CD8-positive, alpha-beta T cell (primary cell): ENCODE measurements at regions of chr1 and their contacts with region 1.

Region 1: DNA sequence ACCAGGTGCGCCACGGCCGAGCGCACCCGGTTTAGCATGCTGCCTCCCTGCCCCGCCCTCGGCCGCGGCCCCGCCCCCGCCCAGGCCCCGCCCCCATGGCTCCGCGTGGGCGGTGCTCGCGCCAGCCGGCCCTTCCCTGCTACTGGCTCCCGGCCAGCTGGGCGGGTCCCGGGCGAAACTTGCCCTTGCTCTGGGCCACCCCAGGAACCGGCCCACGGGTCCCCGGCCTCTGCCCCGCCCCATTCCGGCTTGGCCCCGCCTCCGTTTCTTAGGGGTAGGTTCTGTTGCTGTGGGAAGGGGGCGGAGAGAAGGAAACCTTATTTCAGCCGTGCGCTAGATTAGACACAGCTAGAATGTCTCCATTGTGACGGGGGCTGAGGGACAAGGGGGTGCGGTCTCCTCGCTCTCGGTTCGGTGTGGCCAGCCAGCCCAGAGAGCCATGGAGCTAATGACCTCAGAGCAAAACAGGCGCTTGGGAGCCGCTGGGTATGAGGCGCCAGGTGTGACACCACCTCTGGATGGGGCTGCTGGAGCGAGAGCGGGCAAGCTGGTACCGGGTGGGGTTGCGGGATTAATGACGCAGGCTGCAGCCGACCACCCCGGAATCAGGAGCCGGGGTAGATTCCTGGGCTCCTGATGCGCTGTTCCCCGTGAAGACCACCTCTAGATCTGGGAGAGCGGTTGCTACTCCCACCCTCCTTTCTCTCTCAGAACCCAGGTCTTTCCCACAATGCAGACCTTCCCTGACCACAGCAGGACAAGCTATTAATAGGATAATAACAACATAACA is at the start of gene PPM1J:
- DNase-seq: peak; percentile 90 to 97 (median 95)
- ATAC-seq: peak; percentile 82
- H3K4me3 ChIP-seq: peak within 1 kb of the TSS; percentile 52 to 67
- H3K4me3 Mint-ChIP-seq: peak within 1 kb of the TSS; percentile 90
- H3K27ac ChIP-seq: peak within 1 kb of the TSS; percentile 10 to 42
- H3K27ac Mint-ChIP-seq: peak within 1 kb of the TSS; percentile 88
- H3K4me1 ChIP-seq: peaks cover 25% of the 10 kb centered on the region
- H3K4me1 Mint-ChIP-seq: peaks cover 21% of the 10 kb centered on the region
- H3K27me3 ChIP-seq: peaks cover 0 to 10% of the 10 kb centered on the region in 2 experiments
- H3K27me3 Mint-ChIP-seq: peaks cover 12% of the 10 kb centered on the region
- CTCF ChIP-seq: no peak
- total RNA-seq, gene PPM1J: 0.57 to 0.69 TPM

Region 2: DNA sequence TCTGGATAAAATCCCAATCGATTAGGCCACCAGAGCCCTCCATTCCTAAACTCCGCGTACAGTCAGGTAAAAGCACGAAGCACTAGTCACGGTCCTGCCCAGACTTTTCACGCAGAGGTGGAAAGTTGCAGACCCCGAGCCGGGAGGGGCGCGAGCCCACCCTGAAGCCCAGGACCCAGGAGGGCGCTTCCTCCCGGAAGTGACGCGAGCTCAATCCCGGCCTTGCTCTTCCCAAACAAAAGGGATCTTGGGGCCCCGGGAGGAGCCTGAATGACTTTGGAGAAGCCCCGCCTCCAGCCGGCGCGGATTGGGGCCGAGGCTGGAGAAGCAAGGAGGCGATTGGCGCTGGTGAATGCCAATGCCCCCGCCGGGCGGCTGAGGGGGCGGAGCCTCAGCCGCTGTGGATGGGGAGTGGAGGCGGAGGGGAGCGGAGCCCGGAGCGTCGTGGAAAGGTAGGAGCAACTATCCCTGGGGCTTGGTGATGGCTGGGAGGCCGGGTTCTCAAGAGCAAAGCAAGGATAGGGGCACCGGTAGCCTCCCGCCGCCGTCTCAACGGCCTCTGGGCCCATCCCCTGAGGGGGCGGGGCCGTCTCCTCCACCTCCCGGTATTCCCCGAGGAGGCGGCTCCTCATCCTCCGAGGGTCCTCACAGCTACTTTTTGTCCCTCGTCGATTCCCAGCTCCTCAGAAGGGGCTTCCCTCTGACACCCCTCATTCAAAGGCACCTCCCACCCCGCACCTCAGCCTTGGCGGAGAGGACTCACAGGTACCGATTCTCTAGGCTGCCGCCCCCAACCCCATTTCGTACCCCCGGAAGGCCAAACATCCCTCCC is 319.4 kb before region 1 on chr1 and contains the start of gene CTTNBP2NL:
- CTCF ChIA-PET with region 1: interaction called, 32 read pairs
- POLR2A ChIA-PET with region 1: interaction called, 3 read pairs
- intact Hi-C with region 1: loop called in 1 of 2 experiments (anchors 1 kb)
- DNase-seq: peak; percentile 51 to 87 (median 78)
- ATAC-seq: peak; percentile 98
- H3K4me3 ChIP-seq: peak within 1 kb of the TSS; percentile 86 to 89
- H3K4me3 Mint-ChIP-seq: peak within 1 kb of the TSS; percentile 83
- H3K27ac ChIP-seq: no peak within 1 kb of the TSS
- H3K27ac Mint-ChIP-seq: peak within 1 kb of the TSS; percentile 37
- H3K4me1 ChIP-seq: peaks cover 15% of the 10 kb centered on the region
- H3K4me1 Mint-ChIP-seq: peaks cover 15% of the 10 kb centered on the region
- H3K27me3 ChIP-seq: peaks cover 3% of the 10 kb centered on the region in 2 experiments
- H3K27me3 Mint-ChIP-seq: peaks cover 21% of the 10 kb centered on the region
- CTCF ChIP-seq: no peak
- total RNA-seq, gene CTTNBP2NL: not detected

Region 3: GRCh38 chr1:112674439-112674985 is 40.9 kb before region 1 on chr1 and contains the start of gene MOV10:
- CTCF ChIA-PET with region 1: interaction called, 12 read pairs
- POLR2A ChIA-PET with region 1: interaction called, 15 read pairs
- intact Hi-C with region 1: no loop called
- DNase-seq: peak in 8 of 9 experiments; percentile 34 to 85 (median 62)
- ATAC-seq: peak; percentile 67
- H3K4me3 ChIP-seq: peak within 1 kb of the TSS; percentile 65 to 85
- H3K4me3 Mint-ChIP-seq: peak within 1 kb of the TSS; percentile 93
- H3K27ac ChIP-seq: peak within 1 kb of the TSS; percentile 63 to 75
- H3K27ac Mint-ChIP-seq: peak within 1 kb of the TSS; percentile 94
- H3K4me1 ChIP-seq: peaks cover 24% of the 10 kb centered on the region
- H3K4me1 Mint-ChIP-seq: peaks cover 46% of the 10 kb centered on the region
- H3K27me3 ChIP-seq: no peaks in the 10 kb centered on the region
- H3K27me3 Mint-ChIP-seq: no peaks in the 10 kb centered on the region
- CTCF ChIP-seq: no peak
- total RNA-seq, gene MOV10: 92.4 to 94.7 TPM

Region 4: DNA sequence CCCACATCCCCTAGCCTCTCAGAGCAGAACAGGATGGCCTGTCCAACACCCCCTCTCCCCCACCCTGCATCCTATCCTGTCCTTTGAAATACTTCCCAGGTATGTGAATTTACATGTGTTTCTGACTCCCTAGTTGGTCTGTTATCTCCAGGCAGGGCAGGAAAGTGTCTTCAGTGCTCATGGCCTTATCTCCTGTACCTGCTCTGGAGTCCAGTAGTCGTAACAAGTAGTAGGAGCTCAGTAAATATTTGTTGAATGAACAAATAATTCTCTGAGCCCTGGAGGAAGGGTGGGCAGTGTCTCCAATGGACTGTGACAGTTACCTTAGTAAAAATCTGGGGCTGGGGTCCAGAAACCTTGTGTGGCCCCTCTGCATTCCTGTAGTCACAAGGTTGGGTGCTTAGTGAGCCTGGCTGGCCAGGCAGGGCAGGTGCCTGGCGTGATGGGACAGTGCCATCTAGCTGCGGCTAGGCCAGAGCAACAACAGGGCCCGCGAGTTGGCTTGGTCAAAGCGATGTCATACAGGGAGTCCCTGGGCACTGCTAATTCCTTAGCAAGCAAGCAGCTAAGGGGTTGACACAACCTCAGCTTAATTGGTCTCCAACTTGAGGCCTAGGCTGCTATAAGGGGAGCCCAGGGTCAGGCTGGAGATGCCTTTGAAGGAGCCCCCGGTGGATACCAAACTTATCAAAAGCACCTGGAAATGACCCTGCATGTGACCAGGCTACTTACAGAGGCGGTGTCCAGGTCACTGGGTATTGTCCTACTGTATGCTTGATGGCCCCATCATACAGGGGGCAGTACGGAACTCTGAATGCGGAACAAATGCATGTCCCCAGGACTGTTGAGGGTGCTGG is 88.7 kb after region 1 on chr1:
- CTCF ChIA-PET with region 1: interaction called, 36 read pairs
- POLR2A ChIA-PET with region 1: no interaction called
- intact Hi-C with region 1: loop called (anchors 1 kb)
- DNase-seq: peak in 7 of 9 experiments; percentile 13 to 60 (median 29)
- ATAC-seq: peak; percentile 56
- H3K4me3 ChIP-seq: no peak overlapping the region
- H3K4me3 Mint-ChIP-seq: no peak overlapping the region
- H3K27ac ChIP-seq: no peak overlapping the region
- H3K27ac Mint-ChIP-seq: no peak overlapping the region
- H3K4me1 ChIP-seq: no peaks in the 10 kb centered on the region
- H3K4me1 Mint-ChIP-seq: no peaks in the 10 kb centered on the region
- H3K27me3 ChIP-seq: no peaks in the 10 kb centered on the region
- H3K27me3 Mint-ChIP-seq: peaks cover 9% of the 10 kb centered on the region
- CTCF ChIP-seq: no peak

Region 5: GRCh38 chr1:112955781-112956543 is 240.5 kb after region 1 on chr1 and contains the start of gene SLC16A1:
- CTCF ChIA-PET with region 1: interaction called, 3 read pairs
- POLR2A ChIA-PET with region 1: no interaction called
- intact Hi-C with region 1: loop called (anchors 1 to 5 kb)
- DNase-seq: peak; percentile 68 to 92 (median 86)
- ATAC-seq: peak; percentile 78
- H3K4me3 ChIP-seq: peak within 1 kb of the TSS; percentile 97 to 98
- H3K4me3 Mint-ChIP-seq: peak within 1 kb of the TSS; percentile 98
- H3K27ac ChIP-seq: peak within 1 kb of the TSS; percentile 79 to 87
- H3K27ac Mint-ChIP-seq: peak within 1 kb of the TSS; percentile 90
- H3K4me1 ChIP-seq: peaks cover 25% of the 10 kb centered on the region
- H3K4me1 Mint-ChIP-seq: peaks cover 63% of the 10 kb centered on the region
- H3K27me3 ChIP-seq: no peaks in the 10 kb centered on the region
- H3K27me3 Mint-ChIP-seq: no peaks in the 10 kb centered on the region
- CTCF ChIP-seq: no peak
- total RNA-seq, gene SLC16A1: 34.0 to 34.1 TPM

Region 6: DNA sequence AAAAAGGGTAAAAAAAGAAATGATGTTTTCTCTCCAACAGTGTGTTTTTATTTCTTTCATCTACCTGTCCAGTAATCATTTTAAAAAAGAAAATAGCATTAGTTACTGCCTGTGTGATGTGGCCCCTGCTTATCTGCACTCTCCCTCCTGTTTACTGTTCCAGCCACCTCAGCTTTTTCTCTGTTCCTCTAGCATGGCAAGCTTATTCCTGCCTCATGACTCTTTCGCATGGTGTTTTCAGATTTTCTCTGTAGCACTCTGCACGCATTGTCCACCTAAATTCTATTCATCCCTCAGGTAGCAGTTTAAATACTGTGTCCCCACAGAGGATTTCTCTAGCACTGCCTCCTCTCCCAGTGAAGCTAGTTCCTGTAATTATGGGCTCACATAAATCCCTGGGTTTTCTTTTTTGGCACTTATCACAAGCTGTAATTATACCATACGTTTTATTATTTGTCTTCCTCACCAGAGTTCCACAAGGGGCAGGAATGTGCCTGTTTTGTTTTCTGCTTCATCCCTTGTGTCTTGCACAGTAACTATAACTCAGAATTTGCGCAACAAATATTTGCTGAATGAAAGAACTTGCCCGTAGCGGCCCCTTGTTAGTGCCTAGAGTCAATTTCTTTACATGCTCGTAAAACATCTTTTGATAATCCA is 306.1 kb after region 1 on chr1:
- CTCF ChIA-PET with region 1: no interaction called
- POLR2A ChIA-PET with region 1: no interaction called
- intact Hi-C with region 1: no loop called
- DNase-seq: no peak
- ATAC-seq: no peak
- H3K4me3 ChIP-seq: no peak overlapping the region
- H3K4me3 Mint-ChIP-seq: no peak overlapping the region
- H3K27ac ChIP-seq: no peak overlapping the region
- H3K27ac Mint-ChIP-seq: no peak overlapping the region
- H3K4me1 ChIP-seq: no peaks in the 10 kb centered on the region
- H3K4me1 Mint-ChIP-seq: no peaks in the 10 kb centered on the region
- H3K27me3 ChIP-seq: no peaks in the 10 kb centered on the region
- H3K27me3 Mint-ChIP-seq: no peaks in the 10 kb centered on the region
- CTCF ChIP-seq: no peak

Region 7: DNA sequence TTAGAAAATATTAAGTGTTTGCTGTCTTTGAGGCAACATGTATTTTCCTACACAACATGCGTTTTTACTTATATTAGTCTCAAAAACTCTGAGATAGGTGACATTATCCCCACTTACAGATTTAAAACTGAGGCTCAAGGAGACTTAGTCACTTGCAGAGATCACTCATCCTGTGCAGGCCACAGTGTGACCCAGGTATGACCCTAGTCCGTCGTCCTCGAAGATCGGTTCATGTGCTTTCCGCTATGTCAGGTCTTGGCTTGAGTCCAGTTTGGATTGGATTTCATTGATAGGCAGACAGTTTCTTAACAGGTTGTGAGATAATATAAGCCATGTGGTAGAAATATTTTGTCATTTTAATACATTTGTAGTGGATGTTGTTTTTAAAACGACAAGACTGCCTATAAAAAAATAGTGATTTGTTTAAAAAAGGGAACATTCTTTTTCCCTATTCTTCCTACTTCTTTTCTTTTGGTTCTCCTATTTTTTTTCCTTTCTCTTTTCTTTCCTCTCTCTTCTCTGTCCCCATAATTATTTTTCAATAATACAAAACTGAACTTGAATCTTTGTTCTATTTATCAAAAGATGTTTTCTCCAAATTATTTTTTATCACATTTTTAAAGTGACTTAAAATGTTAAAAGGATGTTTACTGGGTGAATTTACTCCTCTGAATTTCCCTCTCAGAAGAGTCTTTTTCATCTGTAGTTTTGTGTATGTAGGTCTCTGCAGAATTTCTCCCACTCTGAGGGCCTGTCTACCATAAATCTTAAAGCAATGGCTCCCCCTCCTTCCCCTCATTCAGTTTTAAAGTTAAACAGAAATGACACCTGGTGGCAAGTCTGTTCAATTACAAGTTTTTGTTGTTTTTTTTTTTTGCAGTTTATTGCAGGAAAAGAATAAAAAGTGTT is 962.0 kb after region 1 on chr1:
- CTCF ChIA-PET with region 1: interaction called, 4 read pairs
- POLR2A ChIA-PET with region 1: no interaction called
- intact Hi-C with region 1: loop called in 1 of 2 experiments (anchors 1 kb)
- DNase-seq: peak in 2 of 9 experiments; percentile 44 to 59
- ATAC-seq: peak; percentile 57
- H3K4me3 ChIP-seq: no peak overlapping the region
- H3K4me3 Mint-ChIP-seq: no peak overlapping the region
- H3K27ac ChIP-seq: no peak overlapping the region
- H3K27ac Mint-ChIP-seq: no peak overlapping the region
- H3K4me1 ChIP-seq: no peaks in the 10 kb centered on the region
- H3K4me1 Mint-ChIP-seq: no peaks in the 10 kb centered on the region
- H3K27me3 ChIP-seq: no peaks in the 10 kb centered on the region
- H3K27me3 Mint-ChIP-seq: no peaks in the 10 kb centered on the region
- CTCF ChIP-seq: peak; percentile 70